Dorsolateral prefrontal cortex (tissue), 120 donors: ENCODE measurements at regions of chr15 and their contacts with region 1.

Region 1: DNA sequence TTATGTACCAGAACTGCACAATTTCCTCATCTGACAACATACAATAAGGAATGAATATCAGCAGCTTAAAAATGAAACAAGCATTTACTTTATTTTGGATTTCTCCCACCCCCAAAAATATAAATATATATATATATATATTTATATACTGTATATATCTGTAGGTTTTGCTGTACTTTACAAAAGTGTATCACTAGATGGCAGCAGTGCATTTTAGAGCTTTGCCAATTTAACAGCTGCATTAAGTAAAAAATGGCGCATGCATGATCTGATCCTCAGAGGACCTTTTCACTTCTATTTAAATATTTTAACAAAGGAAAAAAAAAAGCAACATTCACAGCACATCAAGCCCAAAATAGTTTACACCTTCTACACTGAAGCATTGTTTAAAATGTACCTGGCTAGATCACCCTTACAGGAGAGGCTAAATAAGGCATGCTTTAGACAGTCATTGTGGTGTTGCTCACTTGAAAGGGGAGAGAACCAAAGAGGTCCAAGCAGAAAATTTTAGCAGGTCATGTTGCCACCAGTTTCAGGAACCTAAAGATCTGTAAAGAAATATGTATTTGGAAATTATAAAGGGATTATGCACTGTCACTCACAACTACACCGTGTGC is 72.6 kb downstream of the NPTN start:
- DNase-seq: no peak
- H3K4me3 ChIP-seq: no peak overlapping the region
- H3K27ac ChIP-seq: peak overlapping the region in 9 of 59 donors; percentile 1 to 69 (median 17)
- H3K27me3 ChIP-seq: no peaks in the 10 kb centered on the region
- CTCF ChIP-seq: peak; percentile 44 to 88 (median 70)

Region 2: GRCh38 chr15:73305331-73306211 is 255.0 kb before region 1 on chr15:
- intact Hi-C with region 1: loop called in 1 of 2 experiments (anchors 10 kb)
- DNase-seq: peak in 2 of 10 donors; percentile 58 to 68
- H3K4me3 ChIP-seq: no peak overlapping the region
- H3K27ac ChIP-seq: peak overlapping the region in 7 of 59 donors; percentile 7 to 53 (median 23)
- H3K27me3 ChIP-seq: no peaks in the 10 kb centered on the region
- CTCF ChIP-seq: peak in 54 of 56 donors; percentile 19 to 67 (median 50)

Region 3: GRCh38 chr15:73457334-73457733 is 103.3 kb before region 1 on chr15:
- intact Hi-C with region 1: no loop called
- DNase-seq: no peak
- H3K4me3 ChIP-seq: no peak overlapping the region
- H3K27ac ChIP-seq: no peak overlapping the region
- H3K27me3 ChIP-seq: no peaks in the 10 kb centered on the region
- CTCF ChIP-seq: no peak

Region 4: GRCh38 chr15:73633111-73633990 is 72.7 kb after region 1 on chr15 and contains the start of gene NPTN:
- intact Hi-C with region 1: loop called (anchors 2 kb)
- DNase-seq: peak; percentile 96 to 100 (median 99)
- H3K4me3 ChIP-seq: peak within 1 kb of the TSS; percentile 37 to 99 (median 92)
- H3K27ac ChIP-seq: peak within 1 kb of the TSS; percentile 62 to 97 (median 92)
- H3K27me3 ChIP-seq: no peaks in the 10 kb centered on the region
- CTCF ChIP-seq: peak in 49 of 56 donors; percentile 4 to 67 (median 35)
- total RNA-seq, gene NPTN: 126 to 515 (median 369) TPM